CD4-positive, alpha-beta memory T cell (primary cell): ENCODE measurements at regions of chr20 and their contacts with region 1.

Region 1: DNA sequence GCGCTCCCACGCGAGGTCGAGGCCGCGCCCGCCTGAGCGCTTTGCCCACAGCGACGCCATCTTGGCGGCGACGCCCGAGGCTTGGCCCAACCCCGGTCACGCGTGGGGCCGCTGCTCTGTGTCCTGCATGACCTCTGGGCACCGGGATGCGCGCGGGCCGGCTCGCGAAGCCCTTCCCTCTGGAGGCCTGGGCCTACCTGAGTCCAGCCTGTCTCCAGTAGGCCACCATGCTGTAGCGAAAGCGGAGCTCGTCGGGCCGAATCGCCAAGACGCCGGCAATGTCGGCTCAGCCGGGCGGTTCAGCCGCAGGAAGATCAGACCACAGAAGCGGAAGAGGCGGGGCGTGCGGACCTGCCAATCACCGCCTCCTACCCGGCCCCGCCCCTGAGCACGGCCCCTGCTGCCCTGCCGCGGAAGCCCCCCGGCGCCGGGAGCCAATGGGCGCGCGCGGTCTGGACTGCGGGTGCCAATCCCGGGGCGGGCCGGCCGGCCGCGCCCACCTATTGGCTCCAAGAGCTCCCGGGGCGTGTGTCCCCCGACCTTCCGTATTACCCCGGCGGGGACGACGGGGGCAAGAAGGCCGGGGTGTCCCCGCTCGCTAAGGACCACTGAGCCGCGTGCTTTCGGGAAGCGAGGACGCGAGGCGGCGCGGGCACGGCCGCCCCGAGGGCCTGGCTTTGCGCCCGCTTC is at the start of gene ATP5F1E:
- DNase-seq: peak; percentile 96 to 97 (median 96)
- H3K4me3 ChIP-seq: peak within 1 kb of the TSS; percentile 71 to 82
- H3K4me3 Mint-ChIP-seq: peak within 1 kb of the TSS; percentile 91 to 97 (median 94)
- H3K27ac ChIP-seq: peak within 1 kb of the TSS; percentile 82
- H3K27ac Mint-ChIP-seq: peak within 1 kb of the TSS; percentile 94 to 98 (median 96)
- H3K4me1 ChIP-seq: peaks cover 50% of the 10 kb centered on the region
- H3K4me1 Mint-ChIP-seq: peaks cover 42 to 63% (median 52%) of the 10 kb centered on the region in 4 donors
- H3K27me3 ChIP-seq: no peaks in the 10 kb centered on the region
- H3K27me3 Mint-ChIP-seq: no peaks in the 10 kb centered on the region
- total RNA-seq, gene ATP5F1E: 77.2 to 84.5 TPM

Region 2: DNA sequence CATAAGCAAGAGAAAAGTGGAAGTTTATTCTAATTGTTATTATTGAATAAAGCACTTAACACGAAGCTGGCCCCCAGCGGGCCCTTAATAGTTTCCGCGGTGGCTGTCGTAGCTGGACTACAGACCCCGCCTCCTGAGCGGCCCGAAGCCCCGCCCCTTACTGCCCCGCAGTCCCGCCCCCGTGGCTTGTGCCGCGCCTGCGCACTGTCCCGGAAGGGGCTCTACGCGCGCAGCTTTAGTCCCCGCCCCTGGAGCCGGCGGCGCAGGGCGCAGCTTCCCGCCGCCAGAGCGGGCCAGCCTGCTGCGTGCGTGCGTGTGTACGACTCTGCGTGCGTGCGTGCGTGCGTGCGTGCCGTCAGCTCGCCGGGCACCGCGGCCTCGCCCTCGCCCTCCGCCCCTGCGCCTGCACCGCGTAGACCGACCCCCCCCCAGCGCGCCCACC is 643.3 kb before region 1 on chr20 and contains the start of gene VAPB:
- CTCF ChIA-PET with region 1: no interaction called
- POLR2A ChIA-PET with region 1: interaction called, 5 read pairs
- intact Hi-C with region 1: loop called (anchors 1 kb)
- DNase-seq: peak; percentile 94 to 98 (median 97)
- H3K4me3 ChIP-seq: peak within 1 kb of the TSS; percentile 47 to 58
- H3K4me3 Mint-ChIP-seq: peak within 1 kb of the TSS; percentile 94 to 97 (median 94)
- H3K27ac ChIP-seq: peak within 1 kb of the TSS; percentile 98
- H3K27ac Mint-ChIP-seq: peak within 1 kb of the TSS; percentile 78 to 99 (median 99)
- H3K4me1 ChIP-seq: peaks cover 46% of the 10 kb centered on the region
- H3K4me1 Mint-ChIP-seq: peaks cover 29 to 43% (median 38%) of the 10 kb centered on the region in 4 donors
- H3K27me3 ChIP-seq: no peaks in the 10 kb centered on the region
- H3K27me3 Mint-ChIP-seq: peaks cover 0 to 3% of the 10 kb centered on the region in 2 donors
- total RNA-seq, gene VAPB: 37.6 to 40.1 TPM

Region 3: DNA sequence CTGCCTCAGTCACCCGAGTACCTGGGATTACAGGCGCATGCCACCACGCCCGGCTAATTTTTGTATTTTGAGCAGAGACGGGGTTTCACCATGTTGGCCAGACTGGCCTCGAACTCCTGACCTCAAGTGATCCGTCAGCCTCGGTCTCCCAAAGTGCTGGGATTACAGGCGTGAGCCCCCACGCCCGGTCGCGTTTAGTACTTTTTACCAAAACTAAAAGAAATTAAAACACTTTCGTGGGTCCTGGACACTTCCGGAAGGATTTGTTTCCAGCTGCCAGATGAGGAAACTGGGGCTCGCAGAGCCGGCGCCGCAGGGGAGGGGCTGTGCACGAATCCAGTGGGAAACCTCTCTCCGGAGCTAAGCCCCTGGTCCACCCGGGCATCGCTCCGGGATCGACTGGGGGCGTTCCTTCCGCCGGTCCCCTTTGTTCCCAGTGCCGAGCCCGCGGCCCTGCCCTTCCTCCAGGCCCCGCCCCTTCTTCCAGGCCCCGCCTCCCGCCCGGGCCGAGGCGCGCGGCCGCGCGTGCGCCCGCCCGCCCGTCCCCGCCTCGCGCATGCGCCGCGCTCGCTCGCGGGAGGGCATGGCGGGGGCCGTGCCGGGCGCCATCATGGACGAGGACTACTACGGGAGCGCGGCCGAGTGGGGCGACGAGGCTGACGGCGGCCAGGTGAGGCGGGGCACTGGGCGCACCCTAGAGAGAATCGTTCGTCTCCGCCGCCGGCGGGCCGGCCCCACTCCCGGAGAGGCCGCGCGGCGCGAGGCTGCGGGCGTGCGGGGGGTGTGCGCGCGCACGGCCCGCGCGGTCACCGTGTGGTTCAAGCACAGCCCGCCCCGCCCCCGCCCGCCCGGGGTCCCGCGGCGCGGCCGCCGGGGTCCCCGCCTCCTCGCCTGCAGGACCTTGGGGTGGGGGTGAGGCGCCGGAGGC is 51.2 kb before region 1 on chr20 and contains the start of gene NELFCD:
- CTCF ChIA-PET with region 1: interaction called, 4 read pairs
- POLR2A ChIA-PET with region 1: interaction called, 39 read pairs
- intact Hi-C with region 1: loop called (anchors 1 kb)
- DNase-seq: peak; percentile 84 to 90 (median 88)
- H3K4me3 ChIP-seq: peak within 1 kb of the TSS; percentile 82 to 95
- H3K4me3 Mint-ChIP-seq: peak within 1 kb of the TSS; percentile 91 to 97 (median 94)
- H3K27ac ChIP-seq: peak within 1 kb of the TSS; percentile 66
- H3K27ac Mint-ChIP-seq: peak within 1 kb of the TSS; percentile 72 to 97 (median 93)
- H3K4me1 ChIP-seq: peaks cover 41% of the 10 kb centered on the region
- H3K4me1 Mint-ChIP-seq: peaks cover 29 to 39% (median 33%) of the 10 kb centered on the region in 4 donors
- H3K27me3 ChIP-seq: no peaks in the 10 kb centered on the region
- H3K27me3 Mint-ChIP-seq: no peaks in the 10 kb centered on the region
- total RNA-seq, gene NELFCD: 77.6 to 93.3 TPM

Region 4: GRCh38 chr20:59016795-59017492 is 15.2 kb before region 1 on chr20:
- CTCF ChIA-PET with region 1: interaction called, 3 read pairs
- POLR2A ChIA-PET with region 1: interaction called, 19 read pairs
- intact Hi-C with region 1: no loop called
- DNase-seq: no peak
- H3K4me3 ChIP-seq: no peak overlapping the region
- H3K4me3 Mint-ChIP-seq: peak overlapping the region in 3 of 8 donors; percentile 1 to 21 (median 10)
- H3K27ac ChIP-seq: no peak overlapping the region
- H3K27ac Mint-ChIP-seq: peak overlapping the region in 4 of 7 donors; percentile 0 to 60 (median 46)
- H3K4me1 ChIP-seq: peaks cover 31% of the 10 kb centered on the region
- H3K4me1 Mint-ChIP-seq: peaks cover 25 to 43% (median 33%) of the 10 kb centered on the region in 4 donors
- H3K27me3 ChIP-seq: no peaks in the 10 kb centered on the region
- H3K27me3 Mint-ChIP-seq: no peaks in the 10 kb centered on the region

Region 5: DNA sequence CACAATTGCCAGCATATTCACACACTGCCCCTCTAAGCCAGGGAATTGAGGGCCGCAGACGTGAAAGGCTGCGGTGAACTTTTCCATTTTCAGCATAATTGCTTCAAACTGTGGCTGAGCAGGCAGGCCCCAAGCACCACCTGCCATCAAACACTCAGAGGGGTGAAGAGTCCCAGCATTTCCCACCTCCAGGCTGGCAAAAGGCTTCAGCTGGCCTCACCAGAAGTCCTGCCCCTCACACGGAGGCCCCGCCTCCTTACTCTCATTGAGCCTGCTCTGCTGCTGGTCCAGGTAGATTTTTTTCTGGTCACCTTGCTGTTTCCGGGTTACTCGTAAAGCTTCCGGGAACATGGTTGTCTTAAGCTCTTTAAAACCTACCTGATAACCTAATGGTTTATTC is 62.4 kb after region 1 on chr20:
- CTCF ChIA-PET with region 1: no interaction called
- POLR2A ChIA-PET with region 1: no interaction called
- intact Hi-C with region 1: no loop called
- DNase-seq: no peak
- H3K4me3 ChIP-seq: no peak overlapping the region
- H3K4me3 Mint-ChIP-seq: no peak overlapping the region
- H3K27ac ChIP-seq: no peak overlapping the region
- H3K27ac Mint-ChIP-seq: peak overlapping the region in 1 of 7 donors; percentile 2
- H3K4me1 ChIP-seq: no peaks in the 10 kb centered on the region
- H3K4me1 Mint-ChIP-seq: peaks cover 0 to 8% (median 7%) of the 10 kb centered on the region in 4 donors
- H3K27me3 ChIP-seq: no peaks in the 10 kb centered on the region
- H3K27me3 Mint-ChIP-seq: no peaks in the 10 kb centered on the region

Region 6: GRCh38 chr20:59120491-59120890 is 88.3 kb after region 1 on chr20:
- CTCF ChIA-PET with region 1: interaction called, 3 read pairs
- POLR2A ChIA-PET with region 1: interaction called, 17 read pairs
- intact Hi-C with region 1: no loop called
- DNase-seq: peak; percentile 52 to 69 (median 64)
- H3K4me3 ChIP-seq: no peak overlapping the region
- H3K4me3 Mint-ChIP-seq: peak overlapping the region; percentile 32 to 89 (median 71)
- H3K27ac ChIP-seq: peak overlapping the region; percentile 80
- H3K27ac Mint-ChIP-seq: peak overlapping the region; percentile 94 to 100 (median 99)
- H3K4me1 ChIP-seq: peaks cover 86% of the 10 kb centered on the region
- H3K4me1 Mint-ChIP-seq: peaks cover 66 to 94% (median 86%) of the 10 kb centered on the region in 4 donors
- H3K27me3 ChIP-seq: no peaks in the 10 kb centered on the region
- H3K27me3 Mint-ChIP-seq: no peaks in the 10 kb centered on the region

Region 7: DNA sequence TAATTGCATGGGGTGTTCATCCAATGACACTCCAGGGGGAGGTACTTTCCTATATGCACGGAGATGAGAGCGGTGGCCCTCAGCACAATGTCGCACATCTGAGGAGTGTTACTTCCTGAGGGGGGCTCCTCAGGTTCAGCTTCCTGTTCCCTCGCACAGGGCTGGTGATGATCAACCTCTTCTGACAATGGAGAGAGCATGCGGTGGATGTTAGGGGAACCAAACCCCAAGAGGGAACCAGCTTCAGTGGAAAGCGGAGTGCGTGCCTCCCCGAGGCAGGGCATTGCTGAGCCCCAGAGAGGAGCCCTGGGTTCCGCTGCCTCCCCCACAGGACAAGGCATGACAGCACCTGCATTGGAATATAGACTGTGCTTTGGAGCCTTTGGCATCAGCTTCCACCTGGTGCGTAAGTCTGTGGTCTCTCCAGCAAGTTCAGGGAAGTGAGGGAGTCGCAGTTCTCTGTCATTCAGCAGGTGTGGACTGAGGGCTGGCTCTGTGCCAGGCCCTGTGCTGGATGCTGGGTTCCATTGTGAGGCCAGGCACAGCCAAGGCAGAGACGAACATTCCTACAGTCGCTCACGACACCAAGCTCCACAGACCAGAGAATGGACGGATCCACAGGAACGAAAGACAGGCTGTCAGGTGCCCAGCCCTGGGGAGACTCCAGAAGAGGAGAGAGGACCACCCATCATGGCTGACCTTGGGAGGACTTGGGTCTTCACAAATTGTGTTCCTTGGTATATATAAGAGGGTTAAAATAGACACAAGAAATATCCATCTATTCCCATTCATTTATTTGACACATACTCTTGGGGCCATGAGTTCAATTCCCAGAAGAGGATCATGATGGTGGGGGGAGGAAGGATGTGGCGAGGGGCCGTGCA is 127.6 kb after region 1 on chr20:
- CTCF ChIA-PET with region 1: no interaction called
- POLR2A ChIA-PET with region 1: interaction called, 15 read pairs
- intact Hi-C with region 1: loop called (anchors 5 kb)
- DNase-seq: peak; percentile 85 to 94 (median 89)
- H3K4me3 ChIP-seq: peak overlapping the region; percentile 48 to 76
- H3K4me3 Mint-ChIP-seq: peak overlapping the region; percentile 83 to 96 (median 89)
- H3K27ac ChIP-seq: peak overlapping the region; percentile 97
- H3K27ac Mint-ChIP-seq: peak overlapping the region; percentile 97 to 99 (median 99)
- H3K4me1 ChIP-seq: peaks cover 85% of the 10 kb centered on the region
- H3K4me1 Mint-ChIP-seq: peaks cover 67 to 98% (median 81%) of the 10 kb centered on the region in 4 donors
- H3K27me3 ChIP-seq: no peaks in the 10 kb centered on the region
- H3K27me3 Mint-ChIP-seq: no peaks in the 10 kb centered on the region

Region 8: GRCh38 chr20:59341805-59342634 is 309.9 kb after region 1 on chr20:
- CTCF ChIA-PET with region 1: no interaction called
- POLR2A ChIA-PET with region 1: no interaction called
- intact Hi-C with region 1: no loop called
- DNase-seq: no peak
- H3K4me3 ChIP-seq: no peak overlapping the region
- H3K4me3 Mint-ChIP-seq: no peak overlapping the region
- H3K27ac ChIP-seq: no peak overlapping the region
- H3K27ac Mint-ChIP-seq: no peak overlapping the region
- H3K4me1 ChIP-seq: no peaks in the 10 kb centered on the region
- H3K4me1 Mint-ChIP-seq: no peaks in the 10 kb centered on the region
- H3K27me3 ChIP-seq: no peaks in the 10 kb centered on the region
- H3K27me3 Mint-ChIP-seq: no peaks in the 10 kb centered on the region